ENCODE measurements at regions of chr7 and their contacts with region 1.

Region 1: GRCh38 chr7:23298885-23299769 is at the start of gene MALSU1:
- DNase-seq: peak; percentile 99
- H3K4me3 Mint-ChIP-seq: peak within 1 kb of the TSS; percentile 94
- H3K27ac Mint-ChIP-seq: peak within 1 kb of the TSS; percentile 84
- H3K4me1 Mint-ChIP-seq: peaks cover 59% of the 10 kb centered on the region
- H3K27me3 Mint-ChIP-seq: no peaks in the 10 kb centered on the region
- CTCF ChIP-seq: no peak
- total RNA-seq, gene MALSU1: 108 and 114 TPM in 2 replicates

Region 2: DNA sequence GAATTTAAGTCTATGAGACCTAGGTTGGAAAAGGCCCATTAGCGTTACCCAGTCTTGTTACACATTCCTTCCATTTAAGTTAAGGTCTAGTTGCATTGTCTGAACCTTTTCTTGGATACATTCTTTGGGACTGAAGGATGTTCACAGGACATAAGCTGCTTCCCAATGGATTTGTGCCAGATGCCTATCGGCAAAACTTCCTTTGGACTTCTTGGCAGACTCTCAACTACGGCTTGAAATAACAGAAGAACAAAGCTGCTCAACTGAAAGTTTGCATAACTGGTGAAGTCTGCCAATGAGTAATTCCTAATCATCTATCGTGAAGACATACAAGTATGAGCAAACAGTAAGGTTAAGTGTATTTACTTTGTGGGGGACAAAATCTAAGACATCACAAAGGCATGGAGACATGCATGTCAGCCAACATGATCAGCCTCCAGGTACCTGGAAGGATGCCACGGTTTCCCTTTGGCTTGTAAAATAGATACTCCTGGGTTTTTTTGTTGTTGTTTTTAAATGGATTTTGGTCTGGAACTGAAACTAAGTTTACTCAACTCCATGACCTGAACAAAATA is 35.4 kb after region 1 on chr7:
- CTCF ChIA-PET with region 1: interaction called, 4 read pairs
- intact Hi-C with region 1: loop called (anchors 2 kb)
- DNase-seq: peak; percentile 73
- H3K4me3 Mint-ChIP-seq: peak overlapping the region; percentile 20
- H3K27ac Mint-ChIP-seq: peak overlapping the region; percentile 77
- H3K4me1 Mint-ChIP-seq: peaks cover 53% of the 10 kb centered on the region
- H3K27me3 Mint-ChIP-seq: no peaks in the 10 kb centered on the region
- CTCF ChIP-seq: no peak

Region 3: DNA sequence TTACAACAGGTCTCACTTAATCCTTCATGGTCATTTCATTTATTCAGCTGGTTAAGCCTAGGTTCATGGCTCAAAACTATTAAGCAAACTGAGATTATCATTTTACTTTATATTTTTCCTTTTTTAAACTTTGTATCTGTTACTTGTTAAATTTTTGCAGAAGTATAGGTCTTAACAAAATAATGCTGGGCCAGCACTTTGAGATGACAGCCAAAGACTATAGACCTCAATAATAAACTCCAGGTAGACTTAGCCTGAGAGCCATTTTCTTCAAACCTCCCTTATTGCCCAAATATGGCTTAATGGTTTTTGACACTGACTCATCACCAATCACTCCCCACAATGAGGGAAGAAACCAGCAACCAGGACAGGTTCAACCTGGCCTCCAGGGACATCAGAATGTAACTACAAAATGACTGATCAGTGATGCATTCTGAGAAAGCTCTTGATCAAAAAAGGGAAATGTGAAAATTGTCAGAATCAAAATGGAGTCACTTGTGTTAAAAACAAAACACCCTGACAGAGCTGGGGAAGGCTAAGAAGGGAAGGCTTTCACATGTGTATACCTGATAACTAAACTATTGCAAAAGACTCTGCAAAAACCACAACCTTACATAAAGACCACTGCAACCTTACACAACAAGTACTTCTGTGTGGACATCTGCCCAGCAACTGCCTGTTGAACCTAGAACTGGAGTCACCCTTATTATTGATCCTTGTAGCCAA is 295.9 kb after region 1 on chr7:
- CTCF ChIA-PET with region 1: no interaction called
- intact Hi-C with region 1: no loop called
- DNase-seq: peak; percentile 24
- H3K4me3 Mint-ChIP-seq: no peak overlapping the region
- H3K27ac Mint-ChIP-seq: no peak overlapping the region
- H3K4me1 Mint-ChIP-seq: peaks cover 30% of the 10 kb centered on the region
- H3K27me3 Mint-ChIP-seq: no peaks in the 10 kb centered on the region
- CTCF ChIP-seq: no peak